CD14-positive monocyte (primary cell): ENCODE measurements at regions of chr12 and their contacts with region 1.

Region 1: DNA sequence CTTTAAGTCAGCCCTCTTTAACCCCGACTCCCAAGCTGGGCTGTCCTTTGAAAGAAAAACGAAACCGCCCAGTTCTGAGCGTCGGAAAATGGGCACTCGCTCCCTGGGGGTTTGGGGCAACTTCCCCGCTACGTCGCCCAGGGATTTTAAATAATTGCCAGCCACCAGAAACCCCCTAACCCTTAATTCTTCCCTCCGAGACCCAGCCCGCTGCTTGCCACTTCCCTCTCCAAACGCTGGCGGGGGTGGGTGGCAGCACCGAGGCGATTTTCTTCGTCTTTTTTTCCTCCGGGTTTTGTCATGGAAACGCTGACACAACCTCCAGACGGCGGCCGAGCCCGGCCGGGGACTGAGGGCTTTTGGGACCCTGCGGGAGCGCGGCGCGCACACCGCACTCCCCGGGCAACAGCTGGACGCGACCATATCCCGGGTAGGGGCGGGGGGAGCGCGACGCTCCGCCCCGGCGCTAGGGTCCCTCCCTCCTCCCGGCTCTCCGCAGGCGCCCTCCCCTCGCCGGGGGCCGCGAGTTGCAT is at the start of gene CHST11:
- DNase-seq: peak; percentile 75 to 84 (median 77)
- H3K4me3 ChIP-seq: peak within 1 kb of the TSS; percentile 75 to 100 (median 98)
- H3K4me3 Mint-ChIP-seq: peak within 1 kb of the TSS; percentile 100
- H3K27ac ChIP-seq: peak within 1 kb of the TSS; percentile 85 to 89
- H3K27ac Mint-ChIP-seq: peak within 1 kb of the TSS; percentile 90 to 99 (median 94)
- H3K4me1 ChIP-seq: peaks cover 22 to 36% of the 10 kb centered on the region in 2 donors
- H3K4me1 Mint-ChIP-seq: peaks cover 30% of the 10 kb centered on the region
- H3K27me3 ChIP-seq: no peaks in the 10 kb centered on the region
- H3K27me3 Mint-ChIP-seq: peaks cover 0 to 3% (median 2%) of the 10 kb centered on the region in 3 donors
- CTCF ChIP-seq: peak; percentile 17
- polyA plus RNA-seq, gene CHST11: 44.4 to 66.6 (median 48.4) TPM

Region 2: DNA sequence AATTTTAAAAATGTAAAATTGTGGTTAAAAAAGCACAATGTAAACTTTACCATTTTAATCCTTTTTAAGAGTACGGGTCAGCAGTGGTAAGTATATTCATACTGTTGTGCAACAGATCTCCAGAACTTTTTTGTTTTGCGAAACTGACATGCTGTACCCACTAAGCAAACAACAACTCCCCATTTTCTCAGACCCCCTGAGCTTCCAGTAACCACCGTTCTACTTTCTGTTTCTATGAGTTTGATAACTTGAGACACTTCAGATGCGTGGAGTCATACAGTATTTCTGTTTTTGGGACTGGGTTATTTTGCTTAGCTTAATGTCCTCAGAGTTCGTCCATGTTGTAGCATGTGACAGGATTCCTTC is 38.3 kb after region 1 on chr12:
- intact Hi-C with region 1: loop called in 1 of 2 experiments (anchors 5 kb)
- DNase-seq: peak in 2 of 3 donors; percentile 24 to 68
- H3K4me3 ChIP-seq: no peak overlapping the region
- H3K4me3 Mint-ChIP-seq: peak overlapping the region in 1 of 2 donors; percentile 32
- H3K27ac ChIP-seq: peak overlapping the region in 1 of 2 donors; percentile 74
- H3K27ac Mint-ChIP-seq: peak overlapping the region; percentile 16 to 81 (median 66)
- H3K4me1 ChIP-seq: peaks cover 62 to 70% of the 10 kb centered on the region in 2 donors
- H3K4me1 Mint-ChIP-seq: peaks cover 87% of the 10 kb centered on the region
- H3K27me3 ChIP-seq: no peaks in the 10 kb centered on the region
- H3K27me3 Mint-ChIP-seq: peaks cover 0 to 3% (median 0%) of the 10 kb centered on the region in 3 donors
- CTCF ChIP-seq: no peak

Region 3: GRCh38 chr12:104569346-104570173 is 113.1 kb after region 1 on chr12:
- intact Hi-C with region 1: loop called in 1 of 2 experiments (anchors 5 kb)
- DNase-seq: peak; percentile 76 to 91 (median 90)
- H3K4me3 ChIP-seq: peak overlapping the region in 2 of 3 experiments; percentile 27 to 56
- H3K4me3 Mint-ChIP-seq: peak overlapping the region; percentile 53 to 87
- H3K27ac ChIP-seq: peak overlapping the region; percentile 66 to 90
- H3K27ac Mint-ChIP-seq: peak overlapping the region; percentile 91 to 98 (median 93)
- H3K4me1 ChIP-seq: peaks cover 49 to 59% of the 10 kb centered on the region in 2 donors
- H3K4me1 Mint-ChIP-seq: peaks cover 72% of the 10 kb centered on the region
- H3K27me3 ChIP-seq: no peaks in the 10 kb centered on the region
- H3K27me3 Mint-ChIP-seq: peaks cover 0 to 2% (median 0%) of the 10 kb centered on the region in 3 donors
- CTCF ChIP-seq: no peak

Region 4: GRCh38 chr12:104653730-104654664 is 197.5 kb after region 1 on chr12:
- intact Hi-C with region 1: loop called in 1 of 2 experiments (anchors 5 kb)
- DNase-seq: peak in 1 of 3 donors; percentile 19
- H3K4me3 ChIP-seq: no peak overlapping the region
- H3K4me3 Mint-ChIP-seq: no peak overlapping the region
- H3K27ac ChIP-seq: peak overlapping the region in 1 of 2 donors; percentile 97
- H3K27ac Mint-ChIP-seq: peak overlapping the region; percentile 69 to 99 (median 88)
- H3K4me1 ChIP-seq: peaks cover 65 to 72% of the 10 kb centered on the region in 2 donors
- H3K4me1 Mint-ChIP-seq: peaks cover 85% of the 10 kb centered on the region
- H3K27me3 ChIP-seq: no peaks in the 10 kb centered on the region
- H3K27me3 Mint-ChIP-seq: no peaks in the 10 kb centered on the region
- CTCF ChIP-seq: peak; percentile 44

Region 5: DNA sequence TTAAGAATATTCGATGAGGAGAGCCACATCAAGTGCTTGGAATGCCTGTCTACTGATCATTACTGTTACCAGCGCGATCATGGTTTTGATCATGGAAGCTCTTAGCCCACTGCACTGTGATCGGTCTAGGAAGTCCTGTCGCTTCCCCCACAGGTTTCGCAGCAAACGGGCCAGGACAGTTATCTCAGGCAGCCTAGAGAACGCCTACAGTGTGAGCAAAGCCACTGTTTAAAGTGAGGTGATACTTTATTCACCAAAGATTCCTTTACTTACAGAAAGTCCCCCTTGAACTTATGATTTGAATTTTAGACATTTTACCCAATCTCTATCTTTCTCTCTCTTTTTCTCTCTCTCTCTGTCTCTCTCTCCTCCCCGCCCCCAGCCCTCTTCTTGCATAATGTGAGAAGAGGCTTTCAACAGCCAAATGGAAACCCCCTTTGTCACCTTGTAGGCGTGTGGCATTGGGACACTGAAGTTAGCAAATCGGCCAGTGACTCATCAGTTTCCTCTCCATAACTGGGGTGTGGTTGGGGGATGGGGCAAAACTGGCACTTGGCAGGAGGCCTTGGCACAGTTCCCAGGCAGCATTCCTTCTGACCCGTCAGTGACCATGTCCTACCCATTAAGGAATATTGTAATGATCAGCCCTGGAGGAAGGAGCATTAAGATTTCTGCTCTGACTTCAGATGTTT is 215.1 kb after region 1 on chr12:
- intact Hi-C with region 1: loop called in 1 of 2 experiments (anchors 10 kb)
- DNase-seq: peak; percentile 96 to 99 (median 99)
- H3K4me3 ChIP-seq: peak overlapping the region in 1 of 3 experiments; percentile 36
- H3K4me3 Mint-ChIP-seq: peak overlapping the region; percentile 65 to 84
- H3K27ac ChIP-seq: peak overlapping the region; percentile 97
- H3K27ac Mint-ChIP-seq: peak overlapping the region; percentile 98 to 100 (median 99)
- H3K4me1 ChIP-seq: peaks cover 86 to 94% of the 10 kb centered on the region in 2 donors
- H3K4me1 Mint-ChIP-seq: peaks cover 84% of the 10 kb centered on the region
- H3K27me3 ChIP-seq: no peaks in the 10 kb centered on the region
- H3K27me3 Mint-ChIP-seq: peaks cover 0 to 1% (median 0%) of the 10 kb centered on the region in 3 donors
- CTCF ChIP-seq: no peak

Region 6: GRCh38 chr12:104958009-104958945 is 501.8 kb after region 1 on chr12 and contains the start of gene SLC41A2:
- intact Hi-C with region 1: loop called in 1 of 2 experiments (anchors 5 kb)
- DNase-seq: peak; percentile 75 to 90 (median 79)
- H3K4me3 ChIP-seq: peak within 1 kb of the TSS; percentile 77 to 84 (median 79)
- H3K4me3 Mint-ChIP-seq: peak within 1 kb of the TSS; percentile 90 to 94
- H3K27ac ChIP-seq: peak within 1 kb of the TSS; percentile 14 to 23
- H3K27ac Mint-ChIP-seq: peak within 1 kb of the TSS in 6 of 7 donors; percentile 78 to 91 (median 84)
- H3K4me1 ChIP-seq: peaks cover 10 to 26% of the 10 kb centered on the region in 2 donors
- H3K4me1 Mint-ChIP-seq: peaks cover 24% of the 10 kb centered on the region
- H3K27me3 ChIP-seq: peaks cover 22 to 50% of the 10 kb centered on the region in 2 donors
- H3K27me3 Mint-ChIP-seq: peaks cover 30 to 55% (median 45%) of the 10 kb centered on the region in 3 donors
- CTCF ChIP-seq: no peak
- polyA plus RNA-seq, gene SLC41A2: 0.08 to 0.27 TPM in 2 of 3 donors, not detected in the other